Heart right ventricle (tissue), 16 donors: ENCODE measurements at regions of chr13 and their contacts with region 1.

Region 1: DNA sequence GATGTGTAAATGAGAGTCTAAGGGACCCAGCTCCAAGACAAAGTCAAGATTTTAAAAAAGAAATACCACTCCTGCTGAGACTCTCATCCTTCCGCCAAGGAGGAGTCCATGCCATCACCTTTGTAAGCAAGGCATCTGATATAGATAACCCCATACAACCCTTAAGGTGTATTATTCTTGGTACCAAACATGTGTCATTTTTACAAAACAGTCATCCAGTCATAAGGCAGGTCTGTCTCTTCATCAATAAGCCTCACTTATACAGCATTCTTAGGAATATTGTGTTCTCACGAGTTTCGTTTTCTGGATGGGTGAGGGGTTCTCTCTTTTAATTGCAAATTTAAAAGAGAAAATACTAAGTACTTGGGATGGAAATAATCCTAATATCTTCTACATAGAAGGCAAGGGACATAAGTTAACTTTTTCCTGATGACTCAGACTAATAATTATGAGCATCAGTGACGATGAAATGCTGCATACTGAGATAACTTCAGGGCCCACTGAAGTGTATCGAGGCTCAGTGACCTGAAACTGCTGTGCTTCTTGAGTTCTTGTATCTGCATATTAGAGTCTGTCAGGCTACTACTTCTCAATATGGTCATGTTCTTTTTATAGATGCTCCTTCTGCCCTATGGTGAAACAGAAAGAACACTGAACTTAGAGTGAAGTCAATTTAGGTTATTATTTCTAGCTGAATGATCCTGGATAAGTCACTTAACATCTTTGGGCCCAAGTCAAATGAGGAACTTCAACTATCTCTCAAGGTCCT is 166.6 kb downstream of the KLF12 start:
- DNase-seq: no peak
- ATAC-seq: peak in 1 of 8 donors; percentile 58
- H3K4me3 ChIP-seq: no peak overlapping the region
- H3K27ac ChIP-seq: no peak overlapping the region
- H3K4me1 ChIP-seq: peaks cover 4 to 71% (median 43%) of the 10 kb centered on the region in 9 donors
- H3K27me3 ChIP-seq: no peaks in the 10 kb centered on the region
- CTCF ChIP-seq: no peak

Region 2: DNA sequence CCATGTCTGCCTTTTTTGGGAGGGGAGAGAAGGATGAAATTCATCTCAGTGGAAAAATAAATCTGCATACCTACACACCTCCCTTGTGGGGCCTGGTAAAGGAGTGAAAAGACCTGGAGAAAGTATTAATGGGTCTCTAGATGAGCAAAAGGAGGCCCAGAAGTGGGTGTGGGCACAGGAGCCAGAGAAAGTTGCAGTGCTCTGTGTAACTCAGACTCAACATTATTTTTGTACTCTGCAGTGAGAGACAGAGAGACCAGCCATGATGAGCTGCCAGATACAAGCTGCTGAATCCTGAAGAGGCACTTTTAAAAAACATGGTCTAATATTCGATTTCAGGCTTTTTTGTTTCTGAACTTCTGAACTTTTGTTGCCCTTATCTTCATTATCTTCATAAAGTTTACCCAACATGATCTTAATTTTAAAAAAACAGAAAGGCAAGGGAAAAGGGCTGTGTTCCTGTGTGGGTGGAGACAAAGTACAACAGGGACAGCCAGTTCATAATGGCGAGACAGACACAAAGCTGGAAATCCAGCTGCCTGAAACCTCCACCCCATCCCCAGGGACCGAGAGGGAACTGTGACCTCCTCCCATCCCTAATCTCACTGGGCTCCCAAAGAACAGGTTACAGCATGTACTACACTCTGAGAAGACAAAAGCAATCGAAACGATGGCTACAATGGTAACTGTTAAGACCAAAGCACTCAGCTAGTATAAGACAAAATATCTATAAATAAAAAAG is 89.4 kb after region 1 on chr13:
- intact Hi-C with region 1: loop called in 1 of 10 experiments (anchors 5 kb)
- DNase-seq: peak; percentile 59 to 82
- ATAC-seq: peak; percentile 79 to 97 (median 92)
- H3K4me3 ChIP-seq: peak overlapping the region in 2 of 10 donors; percentile 6 to 10
- H3K27ac ChIP-seq: peak overlapping the region; percentile 52 to 88 (median 58)
- H3K4me1 ChIP-seq: peaks cover 7 to 59% (median 46%) of the 10 kb centered on the region in 9 donors
- H3K27me3 ChIP-seq: no peaks in the 10 kb centered on the region
- CTCF ChIP-seq: no peak